HCT116 (cell line): ENCODE measurements at regions of chr19 and their contacts with region 1.

Region 1: GRCh38 chr19:662962-663681 is at the start of gene RNF126:
- DNase-seq: peak; percentile 81
- ATAC-seq: peak; percentile 85
- H3K4me3 ChIP-seq: peak within 1 kb of the TSS; percentile 64 to 96
- H3K27ac ChIP-seq: peak within 1 kb of the TSS; percentile 99
- H3K4me1 ChIP-seq: peaks cover 18 to 35% of the 10 kb centered on the region in 2 experiments
- H3K27me3 ChIP-seq: no peaks in the 10 kb centered on the region
- CTCF ChIP-seq: no peak
- POLR2A ChIP-seq: peak; percentile 61
- RAD21 ChIP-seq: no peak
- total RNA-seq, gene RNF126: 93.8 TPM

Region 2: DNA sequence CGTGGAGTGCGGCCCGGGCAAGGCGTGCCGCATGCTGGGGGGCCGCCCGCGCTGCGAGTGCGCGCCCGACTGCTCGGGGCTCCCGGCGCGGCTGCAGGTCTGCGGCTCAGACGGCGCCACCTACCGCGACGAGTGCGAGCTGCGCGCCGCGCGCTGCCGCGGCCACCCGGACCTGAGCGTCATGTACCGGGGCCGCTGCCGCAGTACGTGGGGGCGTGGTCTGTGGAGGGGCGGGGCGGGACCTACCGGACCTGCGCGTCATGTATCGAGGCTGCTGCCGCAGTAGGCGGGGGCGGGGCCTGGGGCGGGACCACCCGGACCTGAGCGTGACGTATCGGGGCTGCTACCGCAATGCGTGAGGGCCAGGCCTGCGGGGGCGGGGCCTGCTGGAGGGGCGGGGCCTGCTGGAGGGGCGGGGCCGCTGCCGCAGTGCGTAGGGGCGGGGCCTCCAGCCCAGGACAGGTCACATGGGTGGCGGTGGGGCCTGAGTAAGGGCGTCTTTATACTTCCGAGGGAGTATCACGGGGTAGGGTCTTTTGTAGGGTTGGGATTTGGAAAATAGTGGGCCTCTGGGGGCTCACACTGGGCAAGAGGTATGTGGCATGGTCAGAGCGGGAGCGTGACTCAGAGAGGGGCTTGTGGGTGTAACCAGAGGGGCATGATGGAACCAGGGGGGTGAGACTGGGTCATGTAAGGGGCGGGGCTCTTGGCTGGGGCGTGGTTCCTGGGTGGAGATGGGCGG is 17.3 kb after region 1 on chr19:
- CTCF ChIA-PET with region 1: interaction called, 6 read pairs
- POLR2A ChIA-PET with region 1: interaction called, 5 read pairs
- RAD21 ChIA-PET with region 1: interaction called, 6 to 10 read pairs
- intact Hi-C with region 1: no loop called
- DNase-seq: peak; percentile 93
- ATAC-seq: peak; percentile 74
- H3K4me3 ChIP-seq: peak overlapping the region; percentile 56 to 82
- H3K27ac ChIP-seq: peak overlapping the region; percentile 99
- H3K4me1 ChIP-seq: peaks cover 21 to 45% of the 10 kb centered on the region in 2 experiments
- H3K27me3 ChIP-seq: no peaks in the 10 kb centered on the region
- CTCF ChIP-seq: peak in 2 of 3 experiments; percentile 33 to 35; a peak in 4 of 6 replicates
- POLR2A ChIP-seq: peak; percentile 64
- RAD21 ChIP-seq: no peak

Region 3: DNA sequence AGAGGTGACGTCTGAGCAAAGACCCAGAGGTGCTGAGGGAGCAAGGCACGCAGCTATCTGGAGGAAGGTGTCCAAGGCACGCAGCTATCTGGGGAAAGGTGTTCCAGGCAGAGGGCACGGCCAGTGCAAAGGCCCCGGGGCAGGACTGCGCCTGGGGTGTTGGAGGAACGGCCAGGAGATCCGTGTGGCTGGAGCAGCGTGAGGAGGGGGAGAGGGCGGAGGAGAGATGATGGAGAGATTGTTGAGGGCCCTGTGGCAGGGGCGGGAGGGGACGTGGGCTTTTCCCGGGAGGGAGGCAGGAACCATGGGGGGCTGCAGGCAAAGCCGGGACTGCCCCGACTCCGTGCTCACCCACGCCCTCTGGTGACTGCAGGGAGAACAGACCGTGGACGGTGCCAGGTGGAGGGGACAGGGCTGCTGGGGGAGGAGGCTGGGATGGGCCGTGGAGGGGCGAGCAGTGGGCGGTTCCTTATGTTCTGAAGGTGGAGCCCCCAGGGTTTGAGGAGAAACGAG is 74.5 kb after region 1 on chr19:
- CTCF ChIA-PET with region 1: interaction called, 19 read pairs
- POLR2A ChIA-PET with region 1: no interaction called
- RAD21 ChIA-PET with region 1: interaction called, 3 to 11 read pairs
- intact Hi-C with region 1: loop called (anchors 1 kb)
- DNase-seq: no peak
- ATAC-seq: peak; percentile 87
- H3K4me3 ChIP-seq: no peak overlapping the region
- H3K27ac ChIP-seq: no peak overlapping the region
- H3K4me1 ChIP-seq: no peaks in the 10 kb centered on the region
- H3K27me3 ChIP-seq: no peaks in the 10 kb centered on the region
- CTCF ChIP-seq: peak; percentile 51 to 79 (median 66); a peak in 5 of 6 replicates
- POLR2A ChIP-seq: no peak
- RAD21 ChIP-seq: peak; percentile 41; the same call in 1 of the 2 replicates

Region 4: GRCh38 chr19:796692-797527 is 133.8 kb after region 1 on chr19 and contains the start of gene PTBP1:
- CTCF ChIA-PET with region 1: no interaction called
- POLR2A ChIA-PET with region 1: no interaction called
- RAD21 ChIA-PET with region 1: no interaction called
- intact Hi-C with region 1: loop called (anchors 2 kb)
- DNase-seq: peak; percentile 100
- ATAC-seq: peak; percentile 86
- H3K4me3 ChIP-seq: peak within 1 kb of the TSS; percentile 83 to 88
- H3K27ac ChIP-seq: peak within 1 kb of the TSS; percentile 96
- H3K4me1 ChIP-seq: peaks cover 17 to 36% of the 10 kb centered on the region in 2 experiments
- H3K27me3 ChIP-seq: no peaks in the 10 kb centered on the region
- CTCF ChIP-seq: peak in 1 of 3 experiments; percentile 16; a peak in 1 of 6 replicates
- POLR2A ChIP-seq: peak; percentile 61
- RAD21 ChIP-seq: no peak
- total RNA-seq, gene PTBP1: 676 TPM